ENCODE measurements at regions of chr7 and their contacts with region 1.

Region 1: GRCh38 chr7:10950494-10950893 is 23.2 kb upstream of the PHF14 start:
- DNase-seq: peak in 1 of 2 experiments; percentile 36
- H3K4me3 ChIP-seq: no peak overlapping the region
- H3K4me3 Mint-ChIP-seq: no peak overlapping the region
- H3K27ac Mint-ChIP-seq: no peak overlapping the region
- H3K4me1 ChIP-seq: no peaks in the 10 kb centered on the region
- H3K4me1 Mint-ChIP-seq: peaks cover 16% of the 10 kb centered on the region
- H3K27me3 ChIP-seq: no peaks in the 10 kb centered on the region
- H3K27me3 Mint-ChIP-seq: peaks cover 2% of the 10 kb centered on the region
- CTCF ChIP-seq: no peak

Region 2: DNA sequence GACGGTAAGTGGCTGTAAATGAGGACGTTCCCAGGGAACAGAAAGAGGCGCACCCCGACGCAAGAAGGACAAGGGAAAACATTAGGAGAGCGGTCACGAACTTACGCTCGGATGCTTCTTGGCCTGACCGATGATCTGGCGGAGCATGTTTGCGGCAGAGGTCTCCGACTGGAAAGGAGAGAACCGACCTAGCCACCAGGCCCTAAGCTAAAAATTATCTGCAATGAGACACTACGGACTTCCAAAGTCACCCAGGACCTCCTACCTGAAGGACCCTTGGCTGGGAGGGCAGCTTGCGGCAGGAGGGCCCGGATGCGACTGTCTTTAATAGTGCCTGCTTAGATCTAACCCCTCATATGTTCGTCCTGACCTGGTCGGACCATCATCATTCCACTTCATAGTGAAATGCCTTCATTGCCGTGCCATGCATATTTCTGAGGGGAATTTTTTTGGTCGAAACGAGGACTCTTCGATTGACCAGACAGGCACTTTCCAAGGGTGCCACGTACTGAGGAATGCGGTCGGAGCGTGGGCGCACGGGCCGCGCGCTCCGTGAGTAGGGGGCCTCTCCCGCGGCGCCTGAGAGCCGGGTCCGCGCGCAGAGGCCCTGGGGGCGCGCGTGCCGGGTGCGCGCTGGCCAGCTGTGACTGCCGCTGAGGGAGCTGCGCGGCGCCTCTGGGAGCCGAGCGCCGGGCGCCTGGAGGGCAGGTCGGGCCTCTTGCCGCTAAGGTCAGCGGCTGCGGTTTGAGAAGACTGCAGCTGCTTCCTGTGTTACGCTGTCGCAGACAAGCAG is 10.4 kb before region 1 on chr7:
- CTCF ChIA-PET with region 1: no interaction called
- POLR2A ChIA-PET with region 1: no interaction called
- intact Hi-C with region 1: loop called (anchors 1 kb)
- DNase-seq: peak; percentile 93 to 96
- H3K4me3 ChIP-seq: peak overlapping the region; percentile 51
- H3K4me3 Mint-ChIP-seq: no peak overlapping the region
- H3K27ac Mint-ChIP-seq: no peak overlapping the region
- H3K4me1 ChIP-seq: peaks cover 3% of the 10 kb centered on the region; the same call in 1 of the 2 replicates
- H3K4me1 Mint-ChIP-seq: no peaks in the 10 kb centered on the region
- H3K27me3 ChIP-seq: no peaks in the 10 kb centered on the region
- H3K27me3 Mint-ChIP-seq: no peaks in the 10 kb centered on the region
- CTCF ChIP-seq: no peak

Measured in Caco-2 (cell line).